ENCODE measurements at regions of chr9 and their contacts with region 1.

Region 1: GRCh38 chr9:35374436-35374835 is 115.5 kb upstream of the RUSC2 start:
- DNase-seq: no peak
- ATAC-seq: no peak
- H3K4me3 ChIP-seq: no peak overlapping the region
- H3K27ac ChIP-seq: no peak overlapping the region
- H3K4me1 ChIP-seq: no peaks in the 10 kb centered on the region
- H3K27me3 ChIP-seq: no peaks in the 10 kb centered on the region
- CTCF ChIP-seq: no peak

Region 2: GRCh38 chr9:34759432-34760134 is 614.9 kb before region 1 on chr9:
- CTCF ChIA-PET with region 1: no interaction called
- POLR2A ChIA-PET with region 1: no interaction called
- in situ Hi-C with region 1: no loop called
- intact Hi-C with region 1: no loop called
- DNase-seq: no peak
- ATAC-seq: no peak
- H3K4me3 ChIP-seq: no peak overlapping the region
- H3K27ac ChIP-seq: no peak overlapping the region
- H3K4me1 ChIP-seq: no peaks in the 10 kb centered on the region
- H3K27me3 ChIP-seq: no peaks in the 10 kb centered on the region
- CTCF ChIP-seq: no peak

Region 3: GRCh38 chr9:35306283-35306682 is 68.2 kb before region 1 on chr9:
- CTCF ChIA-PET with region 1: no interaction called
- POLR2A ChIA-PET with region 1: no interaction called
- in situ Hi-C with region 1: no loop called
- intact Hi-C with region 1: loop called (anchors 10 kb)
- DNase-seq: no peak
- ATAC-seq: no peak
- H3K4me3 ChIP-seq: no peak overlapping the region
- H3K27ac ChIP-seq: no peak overlapping the region
- H3K4me1 ChIP-seq: no peaks in the 10 kb centered on the region
- H3K27me3 ChIP-seq: no peaks in the 10 kb centered on the region; the same call in 1 of the 2 replicates
- CTCF ChIP-seq: no peak

Region 4: DNA sequence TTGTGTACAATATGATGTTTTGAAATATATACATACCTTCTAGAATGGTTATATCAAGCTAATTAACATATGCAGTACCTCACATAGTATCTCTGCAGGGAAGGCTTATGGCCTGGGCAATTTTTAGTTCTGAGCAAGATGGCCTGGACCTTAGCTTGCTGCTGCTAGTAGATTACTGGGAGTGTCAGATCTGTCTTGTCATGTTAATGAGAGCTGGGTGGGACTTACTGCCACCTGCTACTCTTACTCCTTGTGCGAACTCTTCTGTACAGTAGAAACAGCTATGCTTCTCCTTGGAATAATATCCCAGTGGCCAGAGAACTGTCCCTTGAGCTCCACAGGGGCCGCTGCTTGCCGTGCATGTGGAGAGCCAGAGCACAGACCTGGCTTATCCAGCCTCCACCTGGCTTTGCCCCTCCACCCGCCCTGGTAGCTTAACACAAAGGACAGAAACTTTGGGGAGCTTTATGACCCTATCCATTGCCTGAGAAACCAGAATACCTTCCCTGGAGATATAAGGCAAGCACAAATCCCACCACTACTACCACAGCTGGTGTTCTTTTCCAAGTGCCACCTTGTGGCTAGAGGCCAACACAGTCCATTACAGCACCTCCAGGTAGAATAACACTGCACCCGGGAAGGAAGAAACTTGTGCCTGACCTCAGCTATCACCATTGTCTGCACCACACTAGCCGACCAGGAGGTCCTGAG is 41.1 kb after region 1 on chr9:
- CTCF ChIA-PET with region 1: no interaction called
- POLR2A ChIA-PET with region 1: no interaction called
- in situ Hi-C with region 1: no loop called
- intact Hi-C with region 1: no loop called
- DNase-seq: no peak
- ATAC-seq: peak; percentile 76; the same call in 1 of the 2 replicates
- H3K4me3 ChIP-seq: no peak overlapping the region
- H3K27ac ChIP-seq: no peak overlapping the region
- H3K4me1 ChIP-seq: no peaks in the 10 kb centered on the region
- H3K27me3 ChIP-seq: no peaks in the 10 kb centered on the region
- CTCF ChIP-seq: peak; percentile 29